CD8-positive, alpha-beta T cell (primary cell): ENCODE measurements at regions of chr1 and their contacts with region 1.

Region 1: DNA sequence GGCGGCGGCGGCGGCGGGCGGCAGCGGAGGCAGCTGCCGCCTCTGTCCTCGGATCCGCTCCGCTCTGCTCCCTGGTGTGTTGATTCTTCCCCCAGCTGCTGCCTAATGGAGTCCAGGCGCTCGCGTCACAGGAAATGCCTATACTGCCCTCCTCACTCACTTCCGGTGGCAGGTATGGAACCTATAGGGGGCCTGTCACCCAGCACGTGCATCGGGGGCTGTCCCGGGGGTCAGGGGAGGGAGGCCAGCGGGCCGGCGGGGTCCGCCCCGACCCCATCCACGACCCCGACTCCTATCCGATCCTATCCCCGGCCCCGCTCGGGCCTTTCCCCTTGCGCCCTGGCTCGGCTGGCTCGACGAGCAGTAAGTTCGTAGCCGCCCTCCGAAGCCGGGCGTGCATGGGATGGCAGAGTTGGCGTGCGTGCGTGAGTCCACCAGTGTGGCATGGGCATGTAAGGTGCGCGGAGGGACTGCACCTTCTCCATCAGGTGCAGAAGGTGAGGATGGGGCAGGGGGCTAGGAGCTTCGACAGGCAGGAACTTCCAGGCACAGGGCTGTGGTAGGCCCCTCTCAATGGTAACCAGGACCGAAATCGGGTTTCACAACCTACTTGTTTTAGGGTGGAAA is at the start of gene WDR26:
- DNase-seq: peak; percentile 65 to 94 (median 83)
- ATAC-seq: peak; percentile 81
- H3K4me3 ChIP-seq: peak within 1 kb of the TSS; percentile 84 to 99
- H3K4me3 Mint-ChIP-seq: peak within 1 kb of the TSS; percentile 97
- H3K27ac ChIP-seq: peak within 1 kb of the TSS; percentile 94 to 98
- H3K27ac Mint-ChIP-seq: peak within 1 kb of the TSS; percentile 99
- H3K4me1 ChIP-seq: peaks cover 50% of the 10 kb centered on the region
- H3K4me1 Mint-ChIP-seq: peaks cover 56% of the 10 kb centered on the region
- H3K27me3 ChIP-seq: no peaks in the 10 kb centered on the region
- H3K27me3 Mint-ChIP-seq: no peaks in the 10 kb centered on the region
- CTCF ChIP-seq: peak; percentile 18
- total RNA-seq, gene WDR26: 176 to 181 TPM

Region 2: DNA sequence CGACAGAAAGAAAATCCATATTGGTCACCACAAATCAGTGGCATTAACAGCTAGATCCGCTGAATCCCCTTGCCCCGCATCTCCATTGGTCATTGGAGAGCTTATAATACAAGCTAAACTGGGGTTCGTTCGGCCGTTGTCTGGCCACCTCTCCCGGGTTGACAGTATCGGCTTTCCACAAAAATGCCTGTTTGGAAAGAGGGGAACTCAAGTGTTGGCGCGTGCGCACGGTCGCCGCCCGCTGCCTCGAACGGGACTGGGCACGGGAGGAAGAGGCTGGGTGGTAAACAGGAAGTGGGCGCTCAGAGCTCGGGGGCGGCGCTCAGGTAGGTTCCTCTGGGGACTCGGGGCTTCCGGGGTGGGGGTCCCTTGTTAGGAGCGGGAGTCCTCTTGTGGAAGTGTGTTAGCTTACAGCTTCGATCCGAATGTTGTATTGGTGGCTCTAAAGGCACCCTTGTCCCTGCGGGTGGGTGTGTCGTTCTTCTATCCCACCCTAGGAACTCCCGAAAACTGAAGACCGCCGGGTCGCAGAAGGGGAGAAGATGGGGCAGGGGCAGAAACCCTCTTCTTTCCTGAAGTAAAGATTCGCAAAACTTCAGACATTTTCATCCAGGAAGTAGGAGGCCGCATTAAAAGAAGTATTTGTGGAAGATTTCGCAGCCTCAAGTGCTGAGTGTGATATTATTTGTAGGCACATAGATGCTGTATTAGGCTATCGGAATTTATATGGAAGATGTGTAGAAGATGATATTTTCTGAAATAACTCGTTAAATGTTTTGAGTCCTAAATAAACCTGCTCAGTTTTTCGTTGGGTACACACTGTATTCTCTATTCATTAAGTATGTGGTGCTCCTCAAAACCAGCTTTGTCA is 1721.5 kb before region 1 on chr1:
- CTCF ChIA-PET with region 1: no interaction called
- POLR2A ChIA-PET with region 1: no interaction called
- intact Hi-C with region 1: loop called in 1 of 2 experiments (anchors 5 kb)
- DNase-seq: peak; percentile 87 to 98 (median 94)
- ATAC-seq: peak; percentile 75
- H3K4me3 ChIP-seq: peak overlapping the region; percentile 90 to 94
- H3K4me3 Mint-ChIP-seq: peak overlapping the region; percentile 96
- H3K27ac ChIP-seq: peak overlapping the region; percentile 93 to 99
- H3K27ac Mint-ChIP-seq: peak overlapping the region; percentile 100
- H3K4me1 ChIP-seq: peaks cover 22% of the 10 kb centered on the region
- H3K4me1 Mint-ChIP-seq: peaks cover 54% of the 10 kb centered on the region
- H3K27me3 ChIP-seq: no peaks in the 10 kb centered on the region
- H3K27me3 Mint-ChIP-seq: no peaks in the 10 kb centered on the region
- CTCF ChIP-seq: no peak

Region 3: DNA sequence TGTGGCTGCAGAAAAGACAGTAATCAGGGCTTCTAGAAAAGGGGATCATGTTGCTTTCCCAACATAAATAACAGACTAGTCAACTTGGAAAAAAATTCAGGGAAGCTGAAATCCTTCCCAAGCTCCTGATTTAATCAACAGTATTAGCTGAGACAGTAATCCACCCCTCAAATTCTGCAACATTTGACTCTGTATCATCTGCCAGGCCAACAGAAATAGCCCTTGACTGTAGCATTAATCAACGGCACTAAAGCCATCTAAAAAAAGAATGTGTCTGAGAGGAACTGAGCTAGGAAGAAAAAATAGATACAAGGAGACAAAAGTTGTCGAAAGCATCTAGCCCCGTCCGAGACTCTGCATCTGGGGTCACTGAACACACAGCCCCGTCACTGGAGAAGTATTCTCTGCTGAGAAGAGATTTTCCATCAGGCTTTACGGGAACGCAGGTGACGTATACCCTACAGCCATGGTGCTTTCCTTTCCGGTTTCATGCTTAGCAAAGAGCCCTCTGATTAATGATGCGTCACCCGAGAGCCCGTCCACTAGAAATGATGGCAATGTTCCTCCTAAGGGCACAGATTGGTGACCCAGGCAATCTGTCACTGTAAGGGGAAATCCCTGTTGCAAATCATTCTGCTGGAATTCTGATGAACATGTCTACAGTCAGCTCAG is 546.9 kb before region 1 on chr1:
- CTCF ChIA-PET with region 1: no interaction called
- POLR2A ChIA-PET with region 1: no interaction called
- intact Hi-C with region 1: no loop called
- DNase-seq: no peak
- ATAC-seq: no peak
- H3K4me3 ChIP-seq: no peak overlapping the region
- H3K4me3 Mint-ChIP-seq: no peak overlapping the region
- H3K27ac ChIP-seq: no peak overlapping the region
- H3K27ac Mint-ChIP-seq: no peak overlapping the region
- H3K4me1 ChIP-seq: no peaks in the 10 kb centered on the region
- H3K4me1 Mint-ChIP-seq: no peaks in the 10 kb centered on the region
- H3K27me3 ChIP-seq: no peaks in the 10 kb centered on the region
- H3K27me3 Mint-ChIP-seq: no peaks in the 10 kb centered on the region
- CTCF ChIP-seq: no peak

Region 4: GRCh38 chr1:224113918-224114786 is 320.7 kb before region 1 on chr1 and contains the start of gene FBXO28:
- CTCF ChIA-PET with region 1: no interaction called
- POLR2A ChIA-PET with region 1: no interaction called
- intact Hi-C with region 1: loop called in 1 of 2 experiments (anchors 1 kb)
- DNase-seq: peak; percentile 86 to 96 (median 94)
- ATAC-seq: peak; percentile 92
- H3K4me3 ChIP-seq: peak within 1 kb of the TSS; percentile 78 to 82
- H3K4me3 Mint-ChIP-seq: peak within 1 kb of the TSS; percentile 92
- H3K27ac ChIP-seq: peak within 1 kb of the TSS; percentile 94 to 97
- H3K27ac Mint-ChIP-seq: peak within 1 kb of the TSS; percentile 95
- H3K4me1 ChIP-seq: peaks cover 22% of the 10 kb centered on the region
- H3K4me1 Mint-ChIP-seq: peaks cover 34% of the 10 kb centered on the region
- H3K27me3 ChIP-seq: no peaks in the 10 kb centered on the region
- H3K27me3 Mint-ChIP-seq: peaks cover 12% of the 10 kb centered on the region
- CTCF ChIP-seq: no peak
- total RNA-seq, gene FBXO28: 43.4 to 44.2 TPM

Region 5: GRCh38 chr1:224287714-224288113 is 147.1 kb before region 1 on chr1:
- CTCF ChIA-PET with region 1: no interaction called
- POLR2A ChIA-PET with region 1: no interaction called
- intact Hi-C with region 1: no loop called
- DNase-seq: no peak
- ATAC-seq: no peak
- H3K4me3 ChIP-seq: no peak overlapping the region
- H3K4me3 Mint-ChIP-seq: no peak overlapping the region
- H3K27ac ChIP-seq: no peak overlapping the region
- H3K27ac Mint-ChIP-seq: no peak overlapping the region
- H3K4me1 ChIP-seq: no peaks in the 10 kb centered on the region
- H3K4me1 Mint-ChIP-seq: no peaks in the 10 kb centered on the region
- H3K27me3 ChIP-seq: no peaks in the 10 kb centered on the region
- H3K27me3 Mint-ChIP-seq: no peaks in the 10 kb centered on the region
- CTCF ChIP-seq: no peak

Region 6: GRCh38 chr1:224356685-224357625 is 77.8 kb before region 1 on chr1 and contains the start of gene CNIH4:
- CTCF ChIA-PET with region 1: interaction called, 4 read pairs
- POLR2A ChIA-PET with region 1: no interaction called
- intact Hi-C with region 1: loop called (anchors 1 kb)
- DNase-seq: peak; percentile 81 to 97 (median 90)
- ATAC-seq: peak; percentile 99
- H3K4me3 ChIP-seq: peak within 1 kb of the TSS; percentile 60 to 78
- H3K4me3 Mint-ChIP-seq: peak within 1 kb of the TSS; percentile 87
- H3K27ac ChIP-seq: peak within 1 kb of the TSS; percentile 63 to 74
- H3K27ac Mint-ChIP-seq: peak within 1 kb of the TSS; percentile 92
- H3K4me1 ChIP-seq: peaks cover 33% of the 10 kb centered on the region
- H3K4me1 Mint-ChIP-seq: peaks cover 53% of the 10 kb centered on the region
- H3K27me3 ChIP-seq: no peaks in the 10 kb centered on the region
- H3K27me3 Mint-ChIP-seq: no peaks in the 10 kb centered on the region
- CTCF ChIP-seq: no peak
- total RNA-seq, gene CNIH4: 26.5 to 28.6 TPM

Region 7: DNA sequence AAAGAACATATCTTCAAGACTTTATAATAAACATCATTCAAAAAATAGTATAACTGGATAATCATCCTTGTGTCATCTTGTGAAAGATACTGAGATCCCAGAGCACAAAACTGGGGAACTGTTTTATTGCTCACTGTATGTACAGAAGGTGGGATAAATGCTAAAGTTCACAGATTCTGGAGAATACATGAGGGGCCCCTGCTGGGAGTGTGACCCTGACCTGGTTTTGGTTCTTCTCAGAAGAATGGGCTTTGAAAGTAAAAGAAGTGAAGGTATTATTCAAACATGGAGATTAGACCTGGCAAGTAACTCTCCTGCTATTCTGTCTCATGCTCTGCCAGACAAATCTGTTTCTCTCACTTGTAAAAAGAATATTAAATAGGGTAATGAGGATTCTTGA is 14.7 kb before region 1 on chr1:
- CTCF ChIA-PET with region 1: interaction called, 4 read pairs
- POLR2A ChIA-PET with region 1: interaction called, 8 read pairs
- intact Hi-C with region 1: loop called in 1 of 2 experiments (anchors 2 kb)
- DNase-seq: no peak
- ATAC-seq: no peak
- H3K4me3 ChIP-seq: no peak overlapping the region
- H3K4me3 Mint-ChIP-seq: no peak overlapping the region
- H3K27ac ChIP-seq: no peak overlapping the region
- H3K27ac Mint-ChIP-seq: no peak overlapping the region
- H3K4me1 ChIP-seq: peaks cover 2% of the 10 kb centered on the region
- H3K4me1 Mint-ChIP-seq: peaks cover 35% of the 10 kb centered on the region
- H3K27me3 ChIP-seq: no peaks in the 10 kb centered on the region
- H3K27me3 Mint-ChIP-seq: no peaks in the 10 kb centered on the region
- CTCF ChIP-seq: no peak

Region 8: DNA sequence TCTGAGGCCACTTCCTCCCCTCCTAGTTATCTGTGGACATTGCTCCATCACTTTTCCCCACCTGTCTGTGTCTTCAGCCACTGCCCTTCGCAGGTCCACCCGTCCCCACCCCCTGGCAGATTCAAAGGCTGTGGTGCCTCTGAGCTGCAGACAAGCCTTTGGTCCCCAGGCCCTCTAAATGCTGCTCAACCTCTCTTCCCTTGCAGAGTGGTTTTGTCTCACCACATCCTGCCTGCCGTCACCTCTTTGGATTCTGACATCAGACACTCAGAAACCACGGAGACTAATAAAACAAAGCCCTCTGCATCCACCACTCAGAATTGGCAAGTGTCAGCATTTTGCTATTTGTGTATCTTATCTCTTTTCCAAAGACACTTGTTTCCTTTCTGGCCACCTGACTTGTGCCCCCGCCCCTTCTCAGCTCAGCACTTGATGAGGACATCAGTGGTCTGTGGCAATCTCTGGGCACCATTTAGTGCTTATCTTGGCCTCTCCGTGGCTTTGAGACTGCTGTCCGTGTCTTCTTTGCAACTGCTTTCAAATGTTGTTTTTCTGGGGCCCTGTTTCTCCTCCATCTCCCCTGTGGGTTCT is 189.0 kb after region 1 on chr1:
- CTCF ChIA-PET with region 1: no interaction called
- POLR2A ChIA-PET with region 1: interaction called, 3 read pairs
- intact Hi-C with region 1: loop called in 1 of 2 experiments (anchors 10 kb)
- DNase-seq: peak; percentile 53 to 95 (median 78)
- ATAC-seq: peak; percentile 85
- H3K4me3 ChIP-seq: peak overlapping the region in 1 of 2 experiments; percentile 28
- H3K4me3 Mint-ChIP-seq: peak overlapping the region; percentile 70
- H3K27ac ChIP-seq: peak overlapping the region; percentile 52 to 76
- H3K27ac Mint-ChIP-seq: peak overlapping the region; percentile 88
- H3K4me1 ChIP-seq: peaks cover 24% of the 10 kb centered on the region
- H3K4me1 Mint-ChIP-seq: peaks cover 28% of the 10 kb centered on the region
- H3K27me3 ChIP-seq: no peaks in the 10 kb centered on the region
- H3K27me3 Mint-ChIP-seq: peaks cover 26% of the 10 kb centered on the region
- CTCF ChIP-seq: no peak

Region 9: GRCh38 chr1:224851210-224851847 is 416.5 kb after region 1 on chr1:
- CTCF ChIA-PET with region 1: no interaction called
- POLR2A ChIA-PET with region 1: no interaction called
- intact Hi-C with region 1: no loop called
- DNase-seq: peak; percentile 13 to 65 (median 47)
- ATAC-seq: no peak
- H3K4me3 ChIP-seq: no peak overlapping the region
- H3K4me3 Mint-ChIP-seq: no peak overlapping the region
- H3K27ac ChIP-seq: no peak overlapping the region
- H3K27ac Mint-ChIP-seq: no peak overlapping the region
- H3K4me1 ChIP-seq: no peaks in the 10 kb centered on the region
- H3K4me1 Mint-ChIP-seq: no peaks in the 10 kb centered on the region
- H3K27me3 ChIP-seq: peaks cover 0 to 2% of the 10 kb centered on the region in 2 experiments
- H3K27me3 Mint-ChIP-seq: peaks cover 2% of the 10 kb centered on the region
- CTCF ChIP-seq: peak; percentile 56